ENCODE measurements at regions of chr20 and their contacts with region 1.

Region 1: GRCh38 chr20:23050847-23051631 is 1.6 kb upstream of the THBD start:
- DNase-seq: peak in 2 of 10 donors; percentile 50 to 60
- H3K4me3 ChIP-seq: peak overlapping the region; percentile 23 to 75 (median 52)
- H3K27ac ChIP-seq: peak overlapping the region in 24 of 59 donors; percentile 21 to 83 (median 64)
- H3K27me3 ChIP-seq: peaks cover 0 to 59% (median 46%) of the 10 kb centered on the region in 45 donors
- CTCF ChIP-seq: peak in 55 of 56 donors; percentile 25 to 73 (median 56)

Region 2: GRCh38 chr20:22931653-22932608 is 119.1 kb before region 1 on chr20:
- intact Hi-C with region 1: no loop called
- DNase-seq: no peak
- H3K4me3 ChIP-seq: no peak overlapping the region
- H3K27ac ChIP-seq: no peak overlapping the region
- H3K27me3 ChIP-seq: no peaks in the 10 kb centered on the region
- CTCF ChIP-seq: no peak

Region 3: DNA sequence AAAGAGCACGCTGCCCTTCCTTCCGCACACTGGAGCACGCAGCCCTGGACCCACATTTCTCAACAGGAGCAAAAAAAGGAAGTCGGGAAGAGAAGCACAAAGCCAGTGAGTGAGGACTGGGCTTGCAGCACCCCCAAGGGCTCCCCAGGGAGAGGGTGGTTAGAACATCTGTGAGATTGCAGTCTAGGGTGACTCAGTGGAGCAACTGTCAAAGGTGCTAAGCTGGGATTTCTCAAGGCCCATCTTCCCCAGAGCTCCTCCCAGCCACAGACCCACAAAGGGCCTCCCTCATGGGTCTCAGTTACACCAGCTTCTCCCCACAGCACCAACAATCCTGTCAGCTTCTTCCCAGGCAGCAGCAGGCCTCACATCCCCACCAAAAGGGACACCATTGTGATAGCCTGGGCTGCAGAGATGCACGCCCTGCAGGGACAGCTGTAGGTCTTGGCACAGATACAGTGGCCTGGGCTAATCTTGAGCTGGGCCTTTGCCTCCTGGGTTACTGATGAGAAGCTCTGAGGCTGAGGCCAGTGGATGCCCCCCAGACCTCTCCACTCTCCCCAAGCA is 74.7 kb after region 1 on chr20:
- intact Hi-C with region 1: no loop called
- DNase-seq: peak in 6 of 10 donors; percentile 27 to 60 (median 52)
- H3K4me3 ChIP-seq: no peak overlapping the region
- H3K27ac ChIP-seq: peak overlapping the region in 30 of 59 donors; percentile 1 to 75 (median 46)
- H3K27me3 ChIP-seq: no peaks in the 10 kb centered on the region
- CTCF ChIP-seq: peak in 1 of 56 donors; percentile 6

Region 4: DNA sequence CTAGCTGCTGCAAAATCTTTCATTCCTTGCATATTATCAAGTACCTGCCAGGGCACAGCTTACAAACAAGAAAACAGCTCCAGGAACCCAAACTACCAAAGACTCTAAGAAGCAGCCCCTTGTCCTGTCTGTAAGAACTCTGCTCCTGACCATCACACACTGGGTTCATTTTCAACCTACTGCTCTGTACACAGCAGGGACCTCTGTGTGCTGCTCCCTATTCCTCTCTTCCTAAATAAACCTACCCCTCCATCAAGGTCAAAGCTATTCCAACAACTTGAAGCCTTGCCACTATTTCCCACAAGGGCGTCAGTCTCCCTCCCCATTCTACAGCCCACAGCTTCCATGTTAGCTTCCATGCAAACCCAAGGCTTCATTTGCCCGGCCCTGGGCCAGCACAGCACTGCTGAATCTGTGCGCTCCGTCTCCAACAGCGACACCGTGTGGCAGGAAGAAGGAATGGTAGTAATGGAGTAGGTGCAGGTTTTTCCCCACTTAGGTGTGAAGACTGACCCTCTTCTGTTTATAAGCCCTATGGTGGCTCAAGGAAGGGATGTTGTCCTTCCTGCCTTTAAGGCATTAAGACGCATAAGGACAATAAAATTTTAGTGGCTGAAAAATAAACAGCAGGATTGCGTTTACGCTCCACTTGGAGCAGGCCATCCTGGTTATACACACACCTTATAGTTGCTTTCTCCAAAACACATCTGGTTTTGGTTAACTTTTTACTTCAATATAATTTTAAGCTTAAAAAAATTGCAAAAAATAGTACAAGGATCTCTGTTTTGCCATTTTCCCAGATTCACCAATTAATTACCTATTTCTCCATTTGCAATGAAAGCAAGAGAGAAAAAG is 184.4 kb after region 1 on chr20:
- intact Hi-C with region 1: loop called in 1 of 2 experiments (anchors 10 kb)
- DNase-seq: peak in 3 of 10 donors; percentile 43 to 52 (median 47)
- H3K4me3 ChIP-seq: no peak overlapping the region
- H3K27ac ChIP-seq: peak overlapping the region in 3 of 59 donors; percentile 8 to 34 (median 24)
- H3K27me3 ChIP-seq: peaks cover 0 to 3% (median 0%) of the 10 kb centered on the region in 45 donors
- CTCF ChIP-seq: peak; percentile 40 to 80 (median 73)